K562 (cell line): ENCODE measurements at regions of chr3 and their contacts with region 1.

Region 1: GRCh38 chr3:51670823-51671733 is at the start of gene TEX264:
- DNase-seq: peak; percentile 90 to 98 (median 97)
- ATAC-seq: peak; percentile 90
- H3K4me3 ChIP-seq: peak within 1 kb of the TSS; percentile 83
- H3K27ac ChIP-seq: peak within 1 kb of the TSS; percentile 88
- H3K4me1 ChIP-seq: peaks cover 21 to 26% of the 10 kb centered on the region in 2 experiments; a peak in 4 of 5 replicates
- H3K27me3 ChIP-seq: no peaks in the 10 kb centered on the region
- CTCF ChIP-seq: no peak
- EP300 ChIP-seq: no peak
- POLR2A ChIP-seq: peak; percentile 83
- RAD21 ChIP-seq: no peak
- polyA plus RNA-seq, gene TEX264: 4.1 to 20.2 TPM

Region 2: DNA sequence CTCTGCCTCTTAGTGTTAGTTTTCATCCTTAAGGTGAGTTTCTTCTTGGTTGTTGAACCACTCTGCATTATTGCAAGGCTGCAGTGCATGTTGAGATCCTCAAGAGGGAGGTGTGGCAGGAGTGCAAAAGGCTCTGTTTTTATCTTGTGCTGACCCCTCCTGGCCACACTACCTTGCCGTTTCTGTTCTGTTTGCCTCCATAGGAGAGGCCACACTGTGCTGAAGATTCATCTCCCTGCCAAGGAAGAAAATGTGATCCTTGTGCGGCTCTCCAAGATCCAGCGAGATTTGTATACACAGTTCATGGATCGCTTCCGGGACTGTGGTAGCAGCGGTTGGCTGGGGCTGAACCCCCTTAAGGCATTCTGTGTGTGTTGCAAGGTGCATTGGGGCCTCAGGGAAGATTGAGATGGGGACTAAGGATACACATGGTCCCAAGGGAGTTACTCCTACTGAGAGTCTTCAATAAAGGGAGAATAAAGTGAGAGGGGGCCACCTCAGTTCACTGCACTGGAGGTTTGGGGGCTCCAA is 33.1 kb before region 1 on chr3:
- CTCF ChIA-PET with region 1: no interaction called
- POLR2A ChIA-PET with region 1: interaction called, 3 read pairs
- in situ Hi-C with region 1: no loop called
- intact Hi-C with region 1: loop called (anchors 1 kb)
- DNase-seq: peak; percentile 69 to 73 (median 72)
- ATAC-seq: peak; percentile 99
- H3K4me3 ChIP-seq: no peak overlapping the region
- H3K27ac ChIP-seq: no peak overlapping the region
- H3K4me1 ChIP-seq: no peaks in the 10 kb centered on the region
- H3K27me3 ChIP-seq: no peaks in the 10 kb centered on the region
- CTCF ChIP-seq: peak; percentile 90 to 99 (median 99)
- EP300 ChIP-seq: no peak
- POLR2A ChIP-seq: no peak
- RAD21 ChIP-seq: peak; percentile 74 to 86